GM12878 (cell line): ENCODE measurements at regions of chr15 and their contacts with region 1.

Region 1: DNA sequence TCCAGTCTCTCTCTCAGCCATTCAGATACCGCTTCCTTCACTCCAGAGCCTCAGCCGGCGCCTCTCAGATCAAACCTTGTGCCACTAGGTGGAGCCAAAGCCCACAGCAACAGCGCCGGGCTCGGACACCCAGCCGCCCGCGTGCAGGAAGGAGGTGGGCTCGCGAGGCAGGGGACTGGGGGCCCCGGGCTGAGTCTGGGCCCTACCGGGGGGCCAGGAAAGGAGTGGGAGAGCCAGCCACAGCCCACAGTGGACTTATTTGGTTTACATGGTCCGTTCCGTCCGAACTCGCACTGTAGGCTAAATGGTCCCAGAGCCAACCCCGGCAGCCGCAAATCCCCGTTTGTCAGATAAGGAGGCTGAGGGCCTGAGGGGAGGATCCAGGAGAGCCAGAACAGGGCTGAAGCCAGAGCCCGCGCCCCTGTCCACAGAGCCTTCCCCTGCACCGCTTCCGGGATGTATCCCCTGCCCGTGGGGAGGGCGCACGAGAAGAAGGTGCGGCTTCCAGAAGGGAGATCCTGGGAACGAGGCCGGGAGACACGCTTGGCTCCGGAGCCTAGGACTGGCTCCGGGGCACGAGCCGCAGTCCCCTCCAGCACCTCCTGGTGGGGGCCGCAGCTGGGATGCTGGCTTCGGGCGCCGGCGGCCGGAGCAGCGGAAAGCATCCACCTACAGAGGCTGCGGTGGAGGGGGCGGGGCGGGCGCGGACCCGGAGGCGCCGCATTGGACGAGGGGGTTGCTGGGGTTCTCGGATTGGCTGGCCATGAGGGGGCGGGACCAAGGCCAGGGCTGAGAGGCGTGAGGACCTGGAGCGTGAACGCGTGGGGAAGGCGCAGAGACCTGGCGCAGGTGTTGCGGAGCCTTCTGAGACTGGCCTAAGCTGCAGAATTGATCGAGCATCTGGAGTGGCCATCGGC is 6.5 kb upstream of the CYP11A1 start:
- DNase-seq: no peak
- ATAC-seq: peak; percentile 97
- H3K4me3 ChIP-seq: peak overlapping the region; percentile 69
- H3K27ac ChIP-seq: peak overlapping the region; percentile 49
- H3K4me1 ChIP-seq: peaks cover 32% of the 10 kb centered on the region
- H3K27me3 ChIP-seq: no peaks in the 10 kb centered on the region; a peak in 2 of 4 replicates
- CTCF ChIP-seq: peak; percentile 83 to 93 (median 84)
- EP300 ChIP-seq: no peak
- POLR2A ChIP-seq: peak; percentile 56; the same call in 1 of the 2 replicates
- RAD21 ChIP-seq: peak; percentile 99

Region 2: GRCh38 chr15:74258456-74259291 is 115.3 kb before region 1 on chr15:
- CTCF ChIA-PET with region 1: no interaction called
- POLR2A ChIA-PET with region 1: no interaction called
- RAD21 ChIA-PET with region 1: no interaction called
- SMC1A ChIA-PET with region 1: no interaction called
- in situ Hi-C with region 1: no loop called
- intact Hi-C with region 1: no loop called
- DNase-seq: no peak
- ATAC-seq: no peak
- H3K4me3 ChIP-seq: no peak overlapping the region
- H3K27ac ChIP-seq: no peak overlapping the region
- H3K4me1 ChIP-seq: no peaks in the 10 kb centered on the region
- H3K27me3 ChIP-seq: peaks cover 0 to 2% of the 10 kb centered on the region in 2 experiments; a peak in 3 of 4 replicates
- CTCF ChIP-seq: no peak
- EP300 ChIP-seq: no peak
- POLR2A ChIP-seq: no peak
- RAD21 ChIP-seq: no peak

Region 3: GRCh38 chr15:74396445-74397238 is 22.7 kb after region 1 on chr15:
- CTCF ChIA-PET with region 1: interaction called, 7 read pairs
- POLR2A ChIA-PET with region 1: interaction called, 302 read pairs
- RAD21 ChIA-PET with region 1: interaction called, 17 read pairs
- SMC1A ChIA-PET with region 1: interaction called, 7 read pairs
- in situ Hi-C with region 1: no loop called
- intact Hi-C with region 1: no loop called
- DNase-seq: peak; percentile 93
- ATAC-seq: peak; percentile 57
- H3K4me3 ChIP-seq: peak overlapping the region; percentile 54
- H3K27ac ChIP-seq: peak overlapping the region; percentile 100
- H3K4me1 ChIP-seq: peaks cover 94% of the 10 kb centered on the region
- H3K27me3 ChIP-seq: no peaks in the 10 kb centered on the region
- CTCF ChIP-seq: peak in 2 of 3 experiments; percentile 17 to 23; a peak in 2 of 6 replicates
- EP300 ChIP-seq: peak; percentile 95 to 96; a peak in 3 of 4 replicates
- POLR2A ChIP-seq: no peak
- RAD21 ChIP-seq: peak; percentile 27; the same call in 1 of the 2 replicates

Region 4: DNA sequence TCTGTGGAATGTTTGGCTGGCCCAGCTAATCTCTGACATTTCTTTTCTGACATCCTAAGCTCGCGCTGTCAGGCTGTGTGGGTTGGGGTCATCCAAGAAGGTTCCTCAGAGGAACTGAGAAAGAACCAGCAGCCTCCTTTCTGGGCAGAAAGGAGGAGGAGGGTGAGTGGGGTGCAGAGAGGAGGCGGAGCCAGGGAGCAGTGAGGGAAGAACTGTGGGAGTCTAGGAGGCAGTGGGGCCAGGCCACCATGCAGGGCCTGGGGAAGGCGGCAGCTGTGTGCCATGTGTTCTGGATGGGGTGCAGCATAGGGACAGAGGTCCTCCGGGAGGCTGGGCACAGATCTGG is 54.4 kb after region 1 on chr15:
- CTCF ChIA-PET with region 1: interaction called, 655 read pairs
- POLR2A ChIA-PET with region 1: interaction called, 6 read pairs
- RAD21 ChIA-PET with region 1: interaction called, 15 read pairs
- SMC1A ChIA-PET with region 1: interaction called, 544 read pairs
- in situ Hi-C with region 1: no loop called
- intact Hi-C with region 1: no loop called
- DNase-seq: no peak
- ATAC-seq: peak; percentile 55
- H3K4me3 ChIP-seq: peak overlapping the region; percentile 98
- H3K27ac ChIP-seq: peak overlapping the region; percentile 84
- H3K4me1 ChIP-seq: peaks cover 59% of the 10 kb centered on the region
- H3K27me3 ChIP-seq: no peaks in the 10 kb centered on the region
- CTCF ChIP-seq: no peak
- EP300 ChIP-seq: no peak
- POLR2A ChIP-seq: no peak; the same call in 1 of the 2 replicates
- RAD21 ChIP-seq: no peak

Region 5: DNA sequence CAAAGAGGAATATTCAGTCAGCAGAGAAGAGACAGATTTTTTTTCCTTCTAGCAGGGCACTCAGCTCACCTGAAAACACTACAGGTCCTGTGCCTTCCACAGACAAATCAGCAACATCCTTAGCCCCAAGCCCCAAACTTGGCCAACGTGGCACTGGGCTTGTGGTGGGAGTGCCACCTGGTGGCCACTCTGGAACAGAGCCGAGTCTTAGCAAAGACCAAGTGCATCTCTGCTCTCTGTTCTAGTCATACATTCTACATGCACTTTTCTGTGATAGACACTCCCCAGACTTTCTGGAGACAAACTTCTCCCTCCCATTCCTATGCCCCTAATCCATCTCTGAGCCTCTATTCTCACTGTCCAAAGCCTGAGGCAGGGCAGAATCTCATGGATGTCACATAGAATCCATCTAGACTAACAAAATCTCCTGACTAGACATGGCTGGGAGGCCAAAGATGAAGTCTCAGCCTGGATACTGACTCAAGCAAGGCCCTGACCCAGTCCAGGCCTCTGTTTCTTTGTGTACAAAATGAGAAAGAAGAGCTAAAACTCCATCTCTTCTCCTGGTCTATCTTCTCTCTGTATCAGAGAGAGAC is 64.8 kb after region 1 on chr15:
- CTCF ChIA-PET with region 1: interaction called, 655 read pairs
- POLR2A ChIA-PET with region 1: interaction called, 8 read pairs
- RAD21 ChIA-PET with region 1: interaction called, 19 read pairs
- SMC1A ChIA-PET with region 1: interaction called, 544 read pairs
- in situ Hi-C with region 1: no loop called
- intact Hi-C with region 1: loop called (anchors 1 kb)
- DNase-seq: peak; percentile 55
- ATAC-seq: peak; percentile 83
- H3K4me3 ChIP-seq: no peak overlapping the region
- H3K27ac ChIP-seq: no peak overlapping the region
- H3K4me1 ChIP-seq: peaks cover 18% of the 10 kb centered on the region
- H3K27me3 ChIP-seq: no peaks in the 10 kb centered on the region
- CTCF ChIP-seq: peak; percentile 94 to 97 (median 95)
- EP300 ChIP-seq: no peak
- POLR2A ChIP-seq: no peak
- RAD21 ChIP-seq: peak; percentile 100

Region 6: GRCh38 chr15:74489518-74490338 is 115.7 kb after region 1 on chr15:
- CTCF ChIA-PET with region 1: interaction called, 41 read pairs
- POLR2A ChIA-PET with region 1: no interaction called
- RAD21 ChIA-PET with region 1: interaction called, 8 read pairs
- SMC1A ChIA-PET with region 1: interaction called, 21 read pairs
- in situ Hi-C with region 1: no loop called
- intact Hi-C with region 1: loop called (anchors 1 kb)
- DNase-seq: peak; percentile 53
- ATAC-seq: peak; percentile 96
- H3K4me3 ChIP-seq: no peak overlapping the region
- H3K27ac ChIP-seq: peak overlapping the region; percentile 54
- H3K4me1 ChIP-seq: peaks cover 8% of the 10 kb centered on the region
- H3K27me3 ChIP-seq: no peaks in the 10 kb centered on the region
- CTCF ChIP-seq: peak; percentile 64 to 83 (median 82)
- EP300 ChIP-seq: no peak
- POLR2A ChIP-seq: peak; percentile 66; the same call in 1 of the 2 replicates
- RAD21 ChIP-seq: peak; percentile 65

Region 7: GRCh38 chr15:74620636-74621545 is 246.9 kb after region 1 on chr15:
- CTCF ChIA-PET with region 1: interaction called, 5 read pairs
- POLR2A ChIA-PET with region 1: no interaction called
- RAD21 ChIA-PET with region 1: interaction called, 3 read pairs
- SMC1A ChIA-PET with region 1: interaction called, 4 read pairs
- in situ Hi-C with region 1: loop called (anchors 5 kb)
- intact Hi-C with region 1: loop called (anchors 2 kb)
- DNase-seq: no peak
- ATAC-seq: peak; percentile 88
- H3K4me3 ChIP-seq: no peak overlapping the region
- H3K27ac ChIP-seq: no peak overlapping the region
- H3K4me1 ChIP-seq: peaks cover 21% of the 10 kb centered on the region
- H3K27me3 ChIP-seq: no peaks in the 10 kb centered on the region
- CTCF ChIP-seq: peak; percentile 99 to 100 (median 99); a peak in 5 of 6 replicates
- EP300 ChIP-seq: no peak
- POLR2A ChIP-seq: peak; percentile 52
- RAD21 ChIP-seq: peak; percentile 71